Tibial artery (tissue), 4 donors: ENCODE measurements at regions of chr1 and their contacts with region 1.

Region 1: GRCh38 chr1:65265651-65266351 is 43.5 kb upstream of the DNAJC6 start:
- DNase-seq: peak; percentile 29 to 67
- H3K4me3 ChIP-seq: peak overlapping the region; percentile 61 to 64
- H3K27ac ChIP-seq: peak overlapping the region; percentile 58 to 59
- H3K4me1 ChIP-seq: peaks cover 0 to 21% (median 0%) of the 10 kb centered on the region in 4 donors
- H3K27me3 ChIP-seq: no peaks in the 10 kb centered on the region
- CTCF ChIP-seq: peak in 1 of 2 experiments; percentile 20

Region 2: GRCh38 chr1:64917328-64917861 is 348.4 kb before region 1 on chr1:
- intact Hi-C with region 1: no loop called
- DNase-seq: peak; percentile 78
- H3K4me3 ChIP-seq: no peak overlapping the region
- H3K27ac ChIP-seq: peak overlapping the region in 1 of 2 donors; percentile 19
- H3K4me1 ChIP-seq: peaks cover 0 to 68% (median 26%) of the 10 kb centered on the region in 4 donors
- H3K27me3 ChIP-seq: no peaks in the 10 kb centered on the region
- CTCF ChIP-seq: no peak

Region 3: DNA sequence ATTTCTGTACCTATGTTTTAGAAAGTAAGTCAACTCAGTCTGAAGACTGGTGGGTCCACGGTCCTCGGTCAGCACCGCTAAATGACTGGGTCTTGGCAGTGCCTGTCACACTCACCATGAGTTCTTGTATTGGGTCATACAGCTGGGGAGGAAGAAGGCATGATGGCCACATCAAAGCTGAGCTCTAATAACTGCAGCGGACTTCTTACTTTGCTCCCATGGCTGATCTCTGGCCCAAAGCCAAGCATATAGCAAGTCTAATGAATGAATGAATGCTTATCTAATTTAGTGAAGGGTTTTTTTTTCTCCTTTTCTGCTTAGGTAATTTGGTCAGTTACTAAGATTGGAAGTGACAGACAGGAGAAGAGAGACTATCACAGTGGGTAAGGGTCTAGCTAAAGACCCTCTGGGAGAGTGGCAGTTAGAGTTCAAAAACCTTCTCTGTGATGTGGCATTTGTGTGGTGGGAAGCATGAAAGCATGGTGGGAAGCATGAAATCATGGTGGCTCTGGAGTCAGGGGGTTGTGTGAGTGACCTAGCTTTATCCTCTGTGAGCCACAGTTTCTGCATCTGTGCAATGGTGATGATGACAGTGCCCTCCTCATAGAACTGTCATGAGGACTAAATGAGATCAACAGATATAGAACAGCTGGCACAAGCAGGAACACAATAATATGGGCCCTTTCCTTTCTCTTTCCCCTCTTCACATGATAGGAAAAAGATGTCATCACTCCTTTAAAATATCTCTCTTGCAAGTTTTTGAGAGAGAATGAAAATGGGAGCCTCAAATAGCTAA is 220.6 kb before region 1 on chr1:
- intact Hi-C with region 1: no loop called
- DNase-seq: no peak
- H3K4me3 ChIP-seq: no peak overlapping the region
- H3K27ac ChIP-seq: no peak overlapping the region
- H3K4me1 ChIP-seq: peaks cover 0 to 21% (median 12%) of the 10 kb centered on the region in 4 donors
- H3K27me3 ChIP-seq: no peaks in the 10 kb centered on the region
- CTCF ChIP-seq: no peak

Region 4: GRCh38 chr1:65332821-65333220 is 67.0 kb after region 1 on chr1:
- intact Hi-C with region 1: no loop called
- DNase-seq: no peak
- H3K4me3 ChIP-seq: no peak overlapping the region
- H3K27ac ChIP-seq: no peak overlapping the region
- H3K4me1 ChIP-seq: no peaks in the 10 kb centered on the region
- H3K27me3 ChIP-seq: no peaks in the 10 kb centered on the region
- CTCF ChIP-seq: no peak

Region 5: GRCh38 chr1:65419681-65420589 is 154.1 kb after region 1 on chr1:
- intact Hi-C with region 1: loop called (anchors 10 kb)
- DNase-seq: peak; percentile 99
- H3K4me3 ChIP-seq: peak overlapping the region; percentile 75 to 79
- H3K27ac ChIP-seq: peak overlapping the region; percentile 95 to 96
- H3K4me1 ChIP-seq: peaks cover 0 to 37% (median 27%) of the 10 kb centered on the region in 4 donors
- H3K27me3 ChIP-seq: no peaks in the 10 kb centered on the region
- CTCF ChIP-seq: no peak